Activated naive CD4-positive, alpha-beta T cell treated with anti-CD3 and anti-CD28 coated beads, Interleukin-2, amount 10 ng/mL, durations not matched to agents 7 days and 5 days (primary cell): ENCODE measurements at regions of chr22 and their contacts with region 1.

Region 1: DNA sequence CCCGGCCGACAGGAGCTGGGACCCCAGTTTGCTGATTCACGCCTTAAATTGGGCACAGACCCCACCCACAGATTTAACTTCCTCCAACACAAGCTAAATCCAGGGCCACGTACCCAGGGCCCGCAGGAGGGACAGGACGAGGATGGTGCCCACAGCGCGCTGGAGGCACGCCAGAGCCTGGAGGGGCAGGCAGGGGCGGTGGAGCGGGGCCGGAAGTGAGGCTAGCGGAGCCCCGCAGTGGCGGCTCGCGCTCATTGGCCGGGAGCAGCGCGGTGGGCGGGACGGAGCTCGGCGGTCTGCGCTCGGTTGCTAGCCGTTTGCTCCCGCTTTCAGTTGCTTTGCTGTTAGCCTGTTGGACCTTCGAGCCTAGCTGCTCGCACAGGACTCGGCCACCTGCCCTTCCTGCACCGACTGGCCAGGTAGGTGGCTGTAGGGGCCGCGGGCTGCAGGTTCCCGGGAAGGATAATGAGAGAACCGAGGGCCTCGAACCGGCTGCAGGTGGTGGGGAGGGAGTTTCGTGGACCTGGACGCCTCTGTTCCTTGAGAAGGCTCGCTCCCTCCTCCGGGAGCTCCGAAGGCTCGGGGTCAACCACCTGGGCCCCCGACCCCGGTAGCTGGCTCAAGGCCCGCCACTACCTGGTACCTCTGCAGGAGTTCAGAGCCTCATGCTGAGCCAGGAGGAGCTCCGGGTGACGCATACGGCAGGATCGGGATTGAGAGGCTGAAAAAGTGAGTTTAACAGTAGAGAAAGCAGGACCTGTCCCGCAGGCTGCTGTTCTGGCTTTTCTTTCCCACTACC is at the start of gene CCDC134:
- DNase-seq: peak; percentile 95
- H3K4me3 Mint-ChIP-seq: peak within 1 kb of the TSS; percentile 86
- H3K27ac Mint-ChIP-seq: peak within 1 kb of the TSS; percentile 97
- H3K4me1 Mint-ChIP-seq: peaks cover 48% of the 10 kb centered on the region
- H3K27me3 Mint-ChIP-seq: no peaks in the 10 kb centered on the region

Region 2: DNA sequence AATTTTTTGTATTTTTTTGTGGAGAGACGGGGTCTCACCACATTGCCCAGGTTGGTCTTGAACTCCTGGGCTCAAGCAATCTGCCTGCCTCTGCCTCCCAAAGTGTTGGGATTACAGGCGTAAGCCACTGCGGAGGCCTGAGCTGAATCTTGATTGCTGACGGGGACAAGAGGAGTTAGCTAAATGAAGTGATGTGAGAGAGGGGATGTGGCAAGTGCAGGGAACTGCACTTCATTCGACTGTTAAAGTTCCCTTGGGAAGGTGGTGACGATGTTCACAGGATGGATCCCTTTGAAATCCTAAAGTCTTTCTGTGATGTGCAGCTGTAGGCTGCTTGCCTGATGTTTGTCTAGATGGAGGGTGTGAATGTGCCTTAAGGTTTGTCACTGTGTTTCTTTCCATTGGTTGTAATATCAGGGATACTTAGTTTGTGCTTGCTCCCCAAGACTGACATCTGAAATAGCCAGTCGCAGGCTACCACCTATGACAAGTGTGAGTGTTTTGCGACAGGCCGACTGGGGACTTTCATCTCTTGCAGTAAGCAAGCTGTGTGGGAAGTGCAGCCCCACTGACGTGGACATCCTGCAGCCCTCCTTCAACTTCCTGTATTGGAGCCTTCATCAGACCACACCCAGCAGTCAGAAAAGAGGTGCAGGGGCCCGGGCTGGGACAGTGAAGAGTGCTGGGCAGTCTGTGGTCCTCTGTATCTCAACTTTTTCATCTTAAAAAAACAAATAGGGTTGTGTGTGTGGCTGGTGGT is 19.6 kb before region 1 on chr22:
- CTCF ChIA-PET with region 1: interaction called, 13 read pairs
- DNase-seq: peak; percentile 98
- H3K4me3 Mint-ChIP-seq: peak overlapping the region; percentile 82
- H3K27ac Mint-ChIP-seq: peak overlapping the region; percentile 97
- H3K4me1 Mint-ChIP-seq: peaks cover 58% of the 10 kb centered on the region
- H3K27me3 Mint-ChIP-seq: peaks cover 6% of the 10 kb centered on the region